Activated CD8-positive, alpha-beta memory T cell treated with anti-CD3 and anti-CD28 coated beads, Interleukin-2, amount 10 ng/mL, durations not matched to agents 7 days and 5 days (primary cell): ENCODE measurements at regions of chr6 and their contacts with region 1.

Region 1: GRCh38 chr6:117449549-117450439 is 24.1 kb upstream of the ROS1 start:
- DNase-seq: peak; percentile 69
- ATAC-seq: peak; percentile 47
- H3K4me3 Mint-ChIP-seq: no peak overlapping the region
- H3K27ac Mint-ChIP-seq: no peak overlapping the region
- H3K4me1 Mint-ChIP-seq: no peaks in the 10 kb centered on the region
- H3K27me3 Mint-ChIP-seq: peaks cover 53% of the 10 kb centered on the region

Region 2: GRCh38 chr6:117463762-117464665 is 14.2 kb after region 1 on chr6:
- CTCF ChIA-PET with region 1: interaction called, 11 read pairs
- DNase-seq: no peak
- ATAC-seq: peak; percentile 91
- H3K4me3 Mint-ChIP-seq: peak overlapping the region; percentile 6
- H3K27ac Mint-ChIP-seq: peak overlapping the region; percentile 63
- H3K4me1 Mint-ChIP-seq: peaks cover 37% of the 10 kb centered on the region
- H3K27me3 Mint-ChIP-seq: peaks cover 19% of the 10 kb centered on the region

Region 3: GRCh38 chr6:117482240-117483003 is 32.6 kb after region 1 on chr6 and contains the start of gene DCBLD1:
- CTCF ChIA-PET with region 1: interaction called, 18 read pairs
- DNase-seq: peak; percentile 76
- ATAC-seq: peak; percentile 87
- H3K4me3 Mint-ChIP-seq: peak within 1 kb of the TSS; percentile 81
- H3K27ac Mint-ChIP-seq: peak within 1 kb of the TSS; percentile 68
- H3K4me1 Mint-ChIP-seq: peaks cover 16% of the 10 kb centered on the region
- H3K27me3 Mint-ChIP-seq: peaks cover 41% of the 10 kb centered on the region
- total RNA-seq, gene DCBLD1: 5.8 to 6.1 TPM

Region 4: DNA sequence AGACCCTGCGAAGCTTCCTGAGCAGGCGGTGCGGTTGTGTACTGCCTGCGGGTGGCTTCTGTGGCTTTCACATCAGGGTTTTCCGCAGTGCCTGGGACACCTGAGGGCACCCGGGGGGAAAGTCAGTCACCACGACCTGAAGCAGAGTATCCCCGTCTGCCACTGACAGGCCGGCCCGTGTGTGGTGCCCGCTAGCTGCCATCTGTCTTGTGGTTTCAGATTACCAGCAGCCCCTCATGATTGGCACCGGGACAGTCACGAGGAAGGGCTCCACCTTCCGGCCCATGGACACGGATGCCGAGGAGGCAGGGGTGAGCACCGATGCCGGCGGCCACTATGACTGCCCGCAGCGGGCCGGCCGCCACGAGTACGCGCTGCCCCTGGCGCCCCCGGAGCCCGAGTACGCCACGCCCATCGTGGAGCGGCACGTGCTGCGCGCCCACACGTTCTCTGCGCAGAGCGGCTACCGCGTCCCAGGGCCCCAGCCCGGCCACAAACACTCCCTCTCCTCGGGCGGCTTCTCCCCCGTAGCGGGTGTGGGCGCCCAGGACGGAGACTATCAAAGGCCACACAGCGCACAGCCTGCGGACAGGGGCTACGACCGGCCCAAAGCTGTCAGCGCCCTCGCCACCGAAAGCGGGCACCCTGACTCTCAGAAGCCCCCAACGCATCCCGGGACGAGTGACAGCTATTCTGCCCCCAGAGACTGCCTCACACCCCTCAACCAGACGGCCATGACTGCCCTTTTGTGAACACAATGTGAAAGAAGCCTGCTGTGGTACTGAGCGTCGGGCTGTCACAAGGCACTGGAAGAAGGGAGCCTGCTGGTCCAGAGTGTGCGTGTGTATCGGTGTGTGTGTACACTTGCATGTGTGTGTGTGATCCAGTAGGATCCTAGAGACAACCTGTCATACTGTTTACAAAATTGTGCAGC is 98.2 kb after region 1 on chr6:
- CTCF ChIA-PET with region 1: interaction called, 47 read pairs
- DNase-seq: peak; percentile 64
- ATAC-seq: peak; percentile 55
- H3K4me3 Mint-ChIP-seq: peak overlapping the region; percentile 72
- H3K27ac Mint-ChIP-seq: peak overlapping the region; percentile 79
- H3K4me1 Mint-ChIP-seq: peaks cover 39% of the 10 kb centered on the region
- H3K27me3 Mint-ChIP-seq: no peaks in the 10 kb centered on the region

Region 5: GRCh38 chr6:117555882-117556498 is 106.2 kb after region 1 on chr6:
- CTCF ChIA-PET with region 1: interaction called, 47 read pairs
- DNase-seq: peak; percentile 57
- ATAC-seq: no peak
- H3K4me3 Mint-ChIP-seq: no peak overlapping the region
- H3K27ac Mint-ChIP-seq: no peak overlapping the region
- H3K4me1 Mint-ChIP-seq: peaks cover 3% of the 10 kb centered on the region
- H3K27me3 Mint-ChIP-seq: peaks cover 4% of the 10 kb centered on the region

Region 6: DNA sequence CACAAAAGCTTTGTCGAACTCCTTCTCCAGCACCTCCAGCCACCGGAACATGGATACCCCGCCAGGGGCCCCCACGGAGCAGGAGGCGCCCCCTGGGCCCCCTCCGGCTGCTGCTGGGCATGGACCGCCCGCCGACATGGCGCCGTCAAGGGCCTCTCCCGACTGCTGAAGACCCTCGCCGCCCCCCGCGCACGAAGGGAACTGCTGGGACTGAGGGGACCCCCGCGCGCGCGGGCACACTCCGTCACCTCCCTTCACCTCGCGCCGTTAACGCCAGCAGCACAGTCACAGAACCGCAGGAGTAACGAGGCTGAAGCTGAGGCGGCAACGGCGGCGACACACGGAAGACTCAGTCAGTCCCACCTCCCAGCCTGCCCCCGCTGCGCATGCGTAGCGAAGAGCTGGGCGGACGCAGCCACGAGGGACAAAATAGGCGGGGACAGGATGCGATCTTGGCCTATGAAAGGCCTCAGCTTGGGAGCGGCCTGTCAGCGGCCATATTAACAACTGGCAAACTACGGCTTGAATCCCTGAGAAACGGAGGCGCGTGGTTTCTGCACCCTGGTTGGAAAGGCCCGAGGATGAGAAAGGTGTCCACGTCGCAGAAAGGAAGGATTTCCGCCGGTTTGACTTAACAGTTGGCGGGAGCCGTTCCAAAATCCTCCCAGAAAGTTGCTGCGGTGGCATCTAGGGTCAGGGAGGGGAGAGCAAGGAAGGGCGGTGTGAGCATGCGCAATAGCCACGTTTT is 152.5 kb after region 1 on chr6 and contains the start of gene GOPC:
- CTCF ChIA-PET with region 1: interaction called, 69 read pairs
- DNase-seq: peak; percentile 97
- ATAC-seq: peak; percentile 97
- H3K4me3 Mint-ChIP-seq: peak within 1 kb of the TSS; percentile 97
- H3K27ac Mint-ChIP-seq: peak within 1 kb of the TSS; percentile 98
- H3K4me1 Mint-ChIP-seq: peaks cover 36% of the 10 kb centered on the region
- H3K27me3 Mint-ChIP-seq: peaks cover 2% of the 10 kb centered on the region
- total RNA-seq, gene GOPC: 21.3 to 25.0 TPM